ENCODE measurements at regions of chr11 and their contacts with region 1.

Region 1: DNA sequence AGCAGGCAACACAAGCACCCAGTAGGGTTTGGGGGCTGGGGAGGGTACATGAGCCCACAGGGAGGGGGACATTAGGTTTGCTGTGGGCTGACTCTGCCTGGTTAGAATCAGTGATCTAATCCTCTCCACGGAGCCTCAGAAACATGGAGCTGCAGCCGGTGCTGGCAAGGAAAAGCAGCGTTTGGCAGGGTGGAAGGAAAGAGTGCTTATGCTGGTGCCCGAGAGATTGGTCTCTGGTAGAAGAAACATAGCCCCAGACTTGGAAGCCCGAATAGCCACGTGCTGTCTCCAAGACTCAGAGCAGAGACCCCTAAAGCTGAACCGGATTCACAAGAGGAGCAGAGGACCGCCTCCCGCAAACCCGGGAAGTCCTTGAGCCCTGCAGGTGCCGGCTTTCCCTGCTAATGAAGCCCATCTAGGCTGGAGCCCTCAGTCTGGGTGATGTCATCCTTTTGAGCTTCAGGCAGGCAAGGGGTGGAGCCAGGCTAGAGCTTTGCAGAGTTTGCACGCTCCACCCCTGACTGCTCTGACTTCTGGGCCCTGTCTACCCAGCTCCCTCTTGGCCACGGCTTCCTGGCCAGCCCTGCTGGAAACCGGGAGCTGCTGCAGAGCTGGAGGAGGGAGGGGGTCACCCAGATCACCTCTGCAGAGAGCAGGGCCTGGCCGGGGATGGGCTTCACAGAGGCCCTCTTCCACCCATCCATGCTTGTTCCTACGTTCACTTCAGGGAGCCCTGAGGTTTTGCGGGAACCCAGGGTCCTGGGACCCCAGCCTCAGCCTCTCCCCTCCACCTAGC is 35.0 kb upstream of the JAM3 start:
- DNase-seq: peak; percentile 87
- ATAC-seq: peak; percentile 90
- H3K4me3 Mint-ChIP-seq: peak overlapping the region; percentile 50
- H3K27ac Mint-ChIP-seq: peak overlapping the region; percentile 69
- H3K4me1 Mint-ChIP-seq: peaks cover 60% of the 10 kb centered on the region
- H3K27me3 Mint-ChIP-seq: no peaks in the 10 kb centered on the region
- CTCF ChIP-seq: no peak

Region 2: GRCh38 chr11:133956650-133957633 is 77.0 kb before region 1 on chr11 and contains the start of gene IGSF9B:
- CTCF ChIA-PET with region 1: interaction called, 6 read pairs
- POLR2A ChIA-PET with region 1: interaction called, 13 read pairs
- intact Hi-C with region 1: no loop called
- DNase-seq: peak; percentile 94
- ATAC-seq: peak; percentile 91
- H3K4me3 Mint-ChIP-seq: peak within 1 kb of the TSS; percentile 89
- H3K27ac Mint-ChIP-seq: peak within 1 kb of the TSS; percentile 92
- H3K4me1 Mint-ChIP-seq: peaks cover 44% of the 10 kb centered on the region
- H3K27me3 Mint-ChIP-seq: peaks cover 12% of the 10 kb centered on the region
- CTCF ChIP-seq: no peak
- total RNA-seq, gene IGSF9B: 124 to 136 TPM

Region 3: GRCh38 chr11:133966921-133967598 is 66.8 kb before region 1 on chr11:
- CTCF ChIA-PET with region 1: interaction called, 6 read pairs
- POLR2A ChIA-PET with region 1: no interaction called
- intact Hi-C with region 1: loop called (anchors 5 kb)
- DNase-seq: peak; percentile 87
- ATAC-seq: peak; percentile 92
- H3K4me3 Mint-ChIP-seq: peak overlapping the region; percentile 76
- H3K27ac Mint-ChIP-seq: peak overlapping the region; percentile 85
- H3K4me1 Mint-ChIP-seq: peaks cover 11% of the 10 kb centered on the region
- H3K27me3 Mint-ChIP-seq: peaks cover 2% of the 10 kb centered on the region
- CTCF ChIP-seq: peak; percentile 72

Measured in activated CD8-positive, alpha-beta T cell treated with anti-CD3 and anti-CD28 coated beads for 36 hours (primary cell).